ENCODE measurements at regions of chr7 and their contacts with region 1.

Region 1: DNA sequence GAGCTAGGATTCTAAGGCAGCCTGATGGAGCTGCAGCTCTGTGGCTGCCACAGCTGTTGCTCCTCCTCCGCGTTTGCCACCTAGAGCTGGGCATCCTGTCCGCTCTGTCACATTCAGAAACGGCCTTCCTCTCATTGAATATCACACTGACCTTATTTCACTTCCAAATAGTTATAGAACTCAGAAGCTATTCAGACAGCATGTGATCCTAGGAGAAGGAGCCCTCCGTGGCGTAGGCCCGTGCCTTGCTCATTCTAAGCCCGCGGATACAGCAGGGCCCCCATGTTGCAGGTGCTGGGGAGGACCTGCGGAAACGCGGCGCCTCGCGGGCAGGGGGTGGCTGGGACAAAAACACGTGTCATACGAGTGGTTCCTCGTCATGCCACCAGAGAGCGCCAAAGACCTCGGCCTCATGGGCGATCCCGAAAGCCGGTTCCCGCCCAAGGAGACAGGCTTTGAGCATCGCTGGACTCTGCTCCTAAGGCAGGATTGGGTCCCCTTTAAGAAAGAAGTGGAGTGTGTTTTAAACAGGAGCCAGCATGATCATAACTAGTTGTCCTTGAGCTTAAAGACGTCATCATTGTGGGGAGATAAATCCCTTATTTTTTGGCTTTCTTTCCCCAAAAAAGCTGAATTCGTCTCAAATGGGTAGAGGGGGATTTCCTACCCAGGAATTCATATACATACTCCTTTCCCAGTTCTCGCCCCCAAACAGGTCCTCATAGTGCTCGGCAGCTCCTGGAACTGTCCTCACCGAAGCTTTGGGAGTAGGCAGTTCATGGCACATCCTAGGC is 17.9 kb upstream of the FIGNL1 start:
- DNase-seq: peak; percentile 60 to 71
- ATAC-seq: peak; percentile 86 to 94
- H3K4me3 ChIP-seq: no peak overlapping the region; the same call in 2 of the 3 replicates
- H3K27ac ChIP-seq: peak overlapping the region; percentile 19 to 67; a peak in 4 of 6 replicates
- H3K4me1 ChIP-seq: 0 out of 3 replicates have a peak, but pooled peaks cover 3% of the 10 kb centered on the region
- CTCF ChIP-seq: peak; percentile 88
- EP300 ChIP-seq: no peak
- POLR2A ChIP-seq: no peak
- RAD21 ChIP-seq: peak; percentile 96 to 97

Region 2: DNA sequence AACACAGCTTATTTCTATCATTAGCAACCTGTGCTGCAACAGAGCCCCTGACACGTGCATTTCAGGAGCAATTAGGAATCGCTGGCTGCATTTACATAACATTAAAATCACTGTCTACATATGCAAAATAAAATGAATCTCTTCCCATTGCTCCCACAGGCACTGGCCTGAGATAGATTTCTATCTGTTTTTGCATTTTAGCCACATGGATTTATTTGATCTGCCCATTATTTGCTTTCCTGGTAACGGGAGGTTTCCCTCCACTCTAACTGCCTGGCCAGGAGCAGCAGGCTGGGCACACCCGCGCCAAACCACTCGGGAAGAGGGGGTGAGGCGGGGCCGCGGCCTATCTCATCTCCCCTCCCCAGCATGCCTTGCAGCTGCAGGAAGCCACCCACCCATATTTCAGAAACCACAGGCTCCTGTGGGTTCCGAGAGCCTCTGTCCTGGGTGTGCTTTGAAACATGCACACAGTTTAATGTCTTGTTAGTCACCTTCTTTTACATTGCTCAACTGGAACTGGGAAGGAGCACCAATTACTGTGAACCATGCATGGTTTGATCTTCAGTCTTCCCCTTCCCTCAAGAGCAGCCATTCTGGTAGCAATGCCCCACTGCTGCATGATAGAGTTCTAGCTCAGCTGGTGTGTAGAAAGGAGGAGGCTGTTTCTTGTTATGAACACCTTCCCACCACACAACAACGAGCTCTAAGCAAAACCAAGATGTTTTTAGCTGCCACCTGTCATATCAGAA is 201.2 kb before region 1 on chr7:
- CTCF ChIA-PET with region 1: no interaction called
- POLR2A ChIA-PET with region 1: no interaction called
- DNase-seq: no peak
- ATAC-seq: no peak
- H3K4me3 ChIP-seq: no peak overlapping the region
- H3K27ac ChIP-seq: no peak overlapping the region
- H3K4me1 ChIP-seq: no peaks in the 10 kb centered on the region
- CTCF ChIP-seq: no peak
- EP300 ChIP-seq: no peak
- POLR2A ChIP-seq: no peak
- RAD21 ChIP-seq: no peak

Region 3: DNA sequence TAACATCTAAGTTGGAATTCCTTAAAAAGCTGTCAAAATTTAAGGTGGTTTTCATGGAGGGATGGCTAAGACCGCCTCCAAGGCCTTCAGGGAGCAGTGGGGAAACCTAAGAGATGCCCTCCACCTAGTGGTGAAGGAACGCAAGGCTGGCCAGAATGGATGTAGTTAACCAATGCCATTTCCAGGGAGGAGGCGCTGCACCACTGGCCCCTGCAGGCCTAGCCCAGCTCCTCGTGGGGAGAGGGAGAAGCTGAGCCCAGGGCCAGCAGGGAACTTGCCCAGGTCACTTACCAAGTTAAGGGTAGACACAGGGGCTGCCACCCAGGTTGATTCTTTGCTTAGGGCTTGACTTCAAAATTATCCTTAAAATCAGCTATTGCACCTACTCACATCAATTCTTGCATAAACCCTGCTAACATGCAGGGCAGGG is 49.9 kb before region 1 on chr7:
- CTCF ChIA-PET with region 1: interaction called, 13 read pairs
- POLR2A ChIA-PET with region 1: no interaction called
- DNase-seq: peak; percentile 69 to 83
- ATAC-seq: peak; percentile 99 to 100
- H3K4me3 ChIP-seq: no peak overlapping the region
- H3K27ac ChIP-seq: no peak overlapping the region
- H3K4me1 ChIP-seq: no peaks in the 10 kb centered on the region
- CTCF ChIP-seq: peak; percentile 86
- EP300 ChIP-seq: no peak
- POLR2A ChIP-seq: no peak
- RAD21 ChIP-seq: peak; percentile 81 to 85

Region 4: GRCh38 chr7:50486512-50486911 is 18.5 kb after region 1 on chr7:
- CTCF ChIA-PET with region 1: interaction called, 25 read pairs
- POLR2A ChIA-PET with region 1: no interaction called
- DNase-seq: no peak
- ATAC-seq: no peak
- H3K4me3 ChIP-seq: no peak overlapping the region
- H3K27ac ChIP-seq: no peak overlapping the region
- H3K4me1 ChIP-seq: no peaks in the 10 kb centered on the region
- CTCF ChIP-seq: no peak
- EP300 ChIP-seq: no peak
- POLR2A ChIP-seq: no peak
- RAD21 ChIP-seq: no peak

Region 5: GRCh38 chr7:50588937-50589336 is 120.9 kb after region 1 on chr7:
- CTCF ChIA-PET with region 1: interaction called, 24 read pairs
- POLR2A ChIA-PET with region 1: no interaction called
- DNase-seq: peak in 1 of 2 experiments; percentile 26
- ATAC-seq: peak; percentile 57 to 81
- H3K4me3 ChIP-seq: no peak overlapping the region
- H3K27ac ChIP-seq: no peak overlapping the region
- H3K4me1 ChIP-seq: no peaks in the 10 kb centered on the region
- CTCF ChIP-seq: no peak
- EP300 ChIP-seq: no peak
- POLR2A ChIP-seq: no peak
- RAD21 ChIP-seq: no peak

Region 6: GRCh38 chr7:50632561-50633413 is 164.8 kb after region 1 on chr7:
- CTCF ChIA-PET with region 1: interaction called, 13 read pairs
- POLR2A ChIA-PET with region 1: no interaction called
- DNase-seq: peak; percentile 35 to 48
- ATAC-seq: peak; percentile 54 to 92; a peak in 4 of 6 replicates
- H3K4me3 ChIP-seq: no peak overlapping the region
- H3K27ac ChIP-seq: 0 out of 6 replicates have a peak overlapping the region, but pooled peaks of 1 of the 2 experiments have one; percentile 40
- H3K4me1 ChIP-seq: peaks cover under 1% of the 10 kb centered on the region; the same call in 1 of the 3 replicates
- CTCF ChIP-seq: peak; percentile 61
- EP300 ChIP-seq: no peak
- POLR2A ChIP-seq: no peak
- RAD21 ChIP-seq: peak in 1 of 2 experiments; percentile 44; a peak in 2 of 5 replicates

Region 7: DNA sequence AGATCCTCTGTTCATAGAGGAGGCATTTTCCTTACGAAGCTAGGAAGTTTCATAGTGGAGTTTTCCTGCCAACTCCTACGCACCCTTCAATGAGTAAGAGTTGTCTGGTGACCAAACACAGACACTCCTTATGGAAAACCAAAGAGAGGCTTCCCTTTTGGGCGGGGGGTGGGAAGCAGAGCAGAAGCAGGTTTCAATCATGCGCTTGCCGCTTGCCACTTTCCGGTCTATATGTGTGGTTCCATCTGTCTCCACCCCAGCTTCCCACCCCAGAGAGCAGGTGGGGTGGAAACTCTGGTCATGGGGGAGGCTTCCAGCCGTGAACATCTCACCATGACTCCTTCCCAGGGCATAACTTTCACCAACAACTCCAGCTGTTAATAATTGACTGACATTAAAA is 383.4 kb after region 1 on chr7:
- CTCF ChIA-PET with region 1: no interaction called
- POLR2A ChIA-PET with region 1: no interaction called
- DNase-seq: no peak
- ATAC-seq: peak in 1 of 2 experiments; percentile 26; a peak in 1 of 6 replicates
- H3K4me3 ChIP-seq: no peak overlapping the region
- H3K27ac ChIP-seq: peak overlapping the region in 1 of 2 experiments; percentile 47; a peak in 1 of 6 replicates
- H3K4me1 ChIP-seq: peaks cover 10% of the 10 kb centered on the region; the same call in 2 of the 3 replicates
- CTCF ChIP-seq: no peak
- EP300 ChIP-seq: no peak
- POLR2A ChIP-seq: no peak
- RAD21 ChIP-seq: no peak

Region 8: DNA sequence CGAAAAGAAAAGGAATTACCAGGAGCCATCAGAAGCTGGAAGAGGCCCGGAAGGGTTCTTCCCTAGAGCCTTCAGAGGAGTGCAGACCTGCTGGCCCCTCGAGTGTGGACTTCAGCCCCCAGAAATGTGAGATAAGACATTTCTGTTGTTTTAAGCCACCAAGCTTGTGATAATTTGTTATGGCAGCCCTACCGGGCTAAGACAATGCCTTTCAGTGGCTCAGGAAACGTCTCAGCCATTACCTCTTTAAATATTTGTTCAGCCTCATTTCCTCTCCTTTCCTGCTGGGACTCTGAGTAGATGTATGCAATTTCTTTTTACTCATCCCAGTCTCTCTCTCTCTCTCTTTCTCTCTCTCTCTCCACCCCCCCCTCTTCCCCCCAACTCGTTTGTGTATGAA is 489.4 kb after region 1 on chr7:
- CTCF ChIA-PET with region 1: no interaction called
- POLR2A ChIA-PET with region 1: no interaction called
- DNase-seq: no peak
- ATAC-seq: no peak
- H3K4me3 ChIP-seq: no peak overlapping the region
- H3K27ac ChIP-seq: peak overlapping the region; percentile 14 to 58; a peak in 2 of 6 replicates
- H3K4me1 ChIP-seq: peaks cover 24% of the 10 kb centered on the region
- CTCF ChIP-seq: no peak
- EP300 ChIP-seq: no peak
- POLR2A ChIP-seq: no peak
- RAD21 ChIP-seq: no peak

Region 9: GRCh38 chr7:51067757-51068156 is 599.7 kb after region 1 on chr7:
- CTCF ChIA-PET with region 1: interaction called, 17 read pairs
- POLR2A ChIA-PET with region 1: no interaction called
- DNase-seq: peak; percentile 66 to 67
- ATAC-seq: peak; percentile 73 to 96
- H3K4me3 ChIP-seq: no peak overlapping the region
- H3K27ac ChIP-seq: peak overlapping the region in 1 of 2 experiments; percentile 54; a peak in 1 of 6 replicates
- H3K4me1 ChIP-seq: 0 out of 3 replicates have a peak, but pooled peaks cover 5% of the 10 kb centered on the region
- CTCF ChIP-seq: peak; percentile 79
- EP300 ChIP-seq: no peak
- POLR2A ChIP-seq: no peak
- RAD21 ChIP-seq: peak; percentile 85 to 87

Region 10: DNA sequence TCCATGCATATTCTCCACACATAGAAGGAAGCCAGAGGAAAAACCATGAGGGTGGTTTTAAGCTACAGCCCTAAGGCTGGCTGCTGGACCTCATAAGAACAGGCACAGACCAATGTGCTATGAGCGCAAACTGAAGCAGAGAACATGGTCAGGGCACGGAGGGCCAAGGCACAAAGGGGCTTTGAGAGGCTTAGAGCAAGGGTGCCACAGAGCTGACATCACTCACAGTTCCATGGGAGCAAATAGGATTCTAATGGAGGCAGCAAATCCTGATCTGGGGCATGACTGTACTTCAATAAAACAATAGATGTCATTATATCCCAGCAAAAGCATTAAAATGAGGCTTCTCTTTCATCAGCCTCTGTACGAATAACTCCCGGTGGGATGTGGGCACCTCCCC is 686.2 kb after region 1 on chr7:
- CTCF ChIA-PET with region 1: interaction called, 111 read pairs
- POLR2A ChIA-PET with region 1: no interaction called
- DNase-seq: no peak
- ATAC-seq: no peak
- H3K4me3 ChIP-seq: no peak overlapping the region
- H3K27ac ChIP-seq: no peak overlapping the region
- H3K4me1 ChIP-seq: no peaks in the 10 kb centered on the region
- CTCF ChIP-seq: no peak
- EP300 ChIP-seq: no peak
- POLR2A ChIP-seq: no peak
- RAD21 ChIP-seq: no peak

Measured in A549 (cell line).